ENCODE measurements at regions of chr7 and their contacts with region 1.

Region 1: DNA sequence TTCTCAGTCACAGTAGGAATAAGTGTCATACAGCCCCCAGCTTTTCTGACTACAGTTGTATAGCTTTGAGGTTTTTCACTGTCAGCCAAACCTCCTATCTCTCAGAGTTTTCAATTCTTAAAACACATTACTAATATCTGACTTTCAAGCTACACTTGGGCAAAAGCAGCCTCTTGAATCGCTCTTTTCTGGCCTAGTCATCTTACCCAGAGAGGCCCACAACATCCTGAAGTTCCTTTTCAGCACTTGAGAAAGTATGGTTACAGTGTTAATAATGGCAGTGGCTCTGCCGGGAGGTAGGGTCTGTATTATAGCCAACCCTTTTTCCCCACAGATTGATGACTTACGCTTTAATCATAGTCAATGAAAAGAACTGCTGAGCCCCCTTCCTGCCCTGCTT is 181.0 kb downstream of the LRRC4 start:
- DNase-seq: no peak
- H3K4me3 Mint-ChIP-seq: no peak overlapping the region
- H3K27ac Mint-ChIP-seq: peak overlapping the region; percentile 88
- H3K4me1 Mint-ChIP-seq: peaks cover 50% of the 10 kb centered on the region
- H3K27me3 Mint-ChIP-seq: peaks cover 2% of the 10 kb centered on the region

Region 2: DNA sequence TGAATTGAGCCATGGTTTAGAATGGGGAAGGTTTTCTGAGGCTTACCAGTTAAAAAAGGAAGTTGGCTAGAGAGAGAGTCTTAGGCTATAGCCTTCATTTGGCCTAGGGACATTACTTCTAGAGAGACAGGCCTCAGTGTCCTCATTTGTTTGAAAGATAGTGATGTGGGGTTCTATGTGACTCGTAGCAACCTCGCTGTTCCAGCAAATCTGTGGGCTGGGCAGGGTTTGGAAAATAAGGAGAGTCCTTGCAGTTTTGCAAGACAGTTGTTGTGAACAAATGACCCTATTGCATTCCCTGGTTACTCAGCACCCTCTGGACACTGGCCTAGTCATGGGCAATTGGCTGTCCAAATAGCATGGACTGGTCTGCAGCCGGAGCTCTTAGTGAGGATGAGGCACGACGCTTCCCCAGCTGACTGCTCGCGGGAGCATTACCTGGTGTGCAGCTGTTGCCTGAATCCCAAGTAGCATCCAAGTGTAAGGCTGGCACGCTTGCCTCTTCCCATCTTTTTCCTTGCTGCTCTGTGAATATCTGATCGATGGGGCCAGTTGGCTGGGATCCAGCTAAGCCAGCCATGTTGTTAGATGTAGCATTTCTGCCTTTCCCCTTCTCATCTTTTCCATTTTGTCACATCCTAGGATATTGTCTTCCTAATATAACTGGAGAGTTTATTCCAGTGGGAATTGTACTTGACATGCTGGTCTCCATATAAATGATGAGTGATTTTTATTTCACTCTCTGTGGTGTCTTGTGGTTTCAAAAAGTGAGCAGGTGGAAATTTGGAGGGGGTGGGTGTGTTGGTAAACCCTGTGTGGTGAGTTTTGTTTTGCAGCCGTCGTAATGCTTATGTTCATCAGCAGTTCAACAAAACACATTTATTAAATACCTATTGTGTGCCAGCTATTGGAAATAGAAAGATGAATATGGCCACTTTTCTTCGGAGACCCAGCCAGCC is 98.4 kb before region 1 on chr7:
- intact Hi-C with region 1: loop called (anchors 2 kb)
- DNase-seq: no peak
- H3K4me3 Mint-ChIP-seq: no peak overlapping the region
- H3K27ac Mint-ChIP-seq: peak overlapping the region; percentile 54
- H3K4me1 Mint-ChIP-seq: peaks cover 41% of the 10 kb centered on the region
- H3K27me3 Mint-ChIP-seq: no peaks in the 10 kb centered on the region

Region 3: GRCh38 chr7:127809261-127809702 is 40.9 kb before region 1 on chr7:
- intact Hi-C with region 1: no loop called
- DNase-seq: no peak
- H3K4me3 Mint-ChIP-seq: no peak overlapping the region
- H3K27ac Mint-ChIP-seq: no peak overlapping the region
- H3K4me1 Mint-ChIP-seq: peaks cover 56% of the 10 kb centered on the region
- H3K27me3 Mint-ChIP-seq: no peaks in the 10 kb centered on the region

Region 4: GRCh38 chr7:127819975-127820731 is 30.0 kb before region 1 on chr7:
- intact Hi-C with region 1: loop called (anchors 1 kb)
- DNase-seq: no peak
- H3K4me3 Mint-ChIP-seq: peak overlapping the region; percentile 3
- H3K27ac Mint-ChIP-seq: peak overlapping the region; percentile 37
- H3K4me1 Mint-ChIP-seq: peaks cover 46% of the 10 kb centered on the region
- H3K27me3 Mint-ChIP-seq: no peaks in the 10 kb centered on the region

Region 5: DNA sequence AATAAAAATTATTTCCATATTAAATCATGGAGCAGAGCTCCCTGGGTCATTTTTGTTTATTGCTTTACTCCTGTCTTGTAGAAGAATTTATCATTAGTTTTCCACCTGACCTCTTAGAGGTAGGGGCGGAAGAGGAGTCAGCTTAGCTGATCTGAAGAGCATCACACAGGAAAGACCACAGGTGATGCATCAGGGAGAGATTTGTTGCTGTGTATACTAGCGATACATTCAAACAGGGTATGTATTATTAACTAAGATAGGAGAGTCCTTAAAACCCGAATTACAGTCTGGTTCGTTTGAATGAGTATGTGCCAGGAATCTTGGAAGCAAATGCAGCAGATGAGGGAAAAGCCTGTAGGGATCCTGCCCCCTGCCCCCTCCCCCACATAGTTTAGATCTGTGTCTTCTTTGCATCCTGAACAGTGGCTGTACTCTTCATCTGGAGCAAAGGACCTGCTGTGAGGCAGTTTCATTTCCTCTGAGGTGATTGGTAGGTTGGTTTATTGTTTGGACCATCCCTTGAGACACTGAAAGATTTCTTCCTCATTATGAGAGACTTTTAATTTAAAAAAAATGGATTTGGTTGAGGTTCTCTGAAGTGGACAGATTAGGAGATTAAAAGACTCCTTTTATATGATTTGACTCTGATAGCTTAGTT is 21.2 kb before region 1 on chr7:
- intact Hi-C with region 1: loop called (anchors 2 kb)
- DNase-seq: no peak
- H3K4me3 Mint-ChIP-seq: no peak overlapping the region
- H3K27ac Mint-ChIP-seq: no peak overlapping the region
- H3K4me1 Mint-ChIP-seq: peaks cover 7% of the 10 kb centered on the region
- H3K27me3 Mint-ChIP-seq: no peaks in the 10 kb centered on the region

Region 6: DNA sequence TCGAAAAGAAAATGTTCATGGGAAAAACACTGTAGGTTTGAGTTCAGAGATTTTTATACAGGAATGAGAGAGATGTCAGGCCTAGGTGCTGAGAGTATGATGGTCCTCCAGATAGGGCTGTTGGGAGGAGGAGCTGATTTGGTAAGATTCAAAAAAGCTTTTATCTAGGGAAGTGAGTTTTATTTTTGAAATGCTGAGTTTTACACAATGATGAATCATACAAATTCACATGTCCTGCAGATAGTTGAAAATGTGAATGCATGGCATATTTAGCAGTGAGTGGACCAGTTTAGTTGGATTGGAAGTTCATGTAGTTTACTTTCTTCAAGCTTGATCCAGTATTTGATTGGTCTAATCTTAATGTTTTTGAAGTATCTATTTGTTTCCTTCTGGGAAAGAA is 26.2 kb after region 1 on chr7:
- intact Hi-C with region 1: loop called (anchors 1 kb)
- DNase-seq: no peak
- H3K4me3 Mint-ChIP-seq: no peak overlapping the region
- H3K27ac Mint-ChIP-seq: no peak overlapping the region
- H3K4me1 Mint-ChIP-seq: peaks cover 15% of the 10 kb centered on the region
- H3K27me3 Mint-ChIP-seq: no peaks in the 10 kb centered on the region

Region 7: DNA sequence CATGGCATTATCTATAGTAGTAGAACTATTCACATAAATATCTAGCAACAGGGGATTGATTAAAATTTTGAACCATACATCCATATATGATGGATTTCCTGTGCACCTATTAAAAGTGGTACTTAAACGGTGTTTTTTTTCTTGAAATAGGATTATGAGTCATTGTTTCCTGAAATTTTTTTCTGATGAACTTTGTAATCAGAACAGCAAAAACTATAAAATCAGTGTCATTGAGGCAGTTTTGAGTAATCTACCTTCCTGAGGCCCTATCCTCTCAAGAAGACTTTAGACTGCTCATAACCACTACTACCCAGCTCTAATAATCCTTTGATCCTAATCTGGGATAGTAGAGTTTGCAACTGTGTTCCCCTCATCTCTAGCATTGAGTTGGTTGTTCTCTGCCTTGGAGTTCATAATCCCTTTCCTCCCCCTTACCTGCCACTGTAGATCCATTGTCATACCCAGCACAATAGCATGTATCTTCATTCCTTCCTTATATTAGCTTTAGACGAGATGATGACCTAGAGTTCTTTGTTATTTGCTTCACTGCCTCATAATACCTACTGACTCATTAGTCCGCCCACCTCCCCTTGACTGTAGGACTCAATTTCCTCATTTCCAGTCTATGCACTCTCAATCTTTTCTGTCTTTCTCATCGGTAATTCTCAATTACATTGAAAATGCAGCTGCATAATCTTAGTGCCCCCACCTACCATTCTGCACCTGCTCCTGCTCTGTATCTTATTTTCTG is 47.7 kb after region 1 on chr7:
- intact Hi-C with region 1: loop called (anchors 1 kb)
- DNase-seq: no peak
- H3K4me3 Mint-ChIP-seq: no peak overlapping the region
- H3K27ac Mint-ChIP-seq: no peak overlapping the region
- H3K4me1 Mint-ChIP-seq: peaks cover 11% of the 10 kb centered on the region
- H3K27me3 Mint-ChIP-seq: no peaks in the 10 kb centered on the region

Region 8: DNA sequence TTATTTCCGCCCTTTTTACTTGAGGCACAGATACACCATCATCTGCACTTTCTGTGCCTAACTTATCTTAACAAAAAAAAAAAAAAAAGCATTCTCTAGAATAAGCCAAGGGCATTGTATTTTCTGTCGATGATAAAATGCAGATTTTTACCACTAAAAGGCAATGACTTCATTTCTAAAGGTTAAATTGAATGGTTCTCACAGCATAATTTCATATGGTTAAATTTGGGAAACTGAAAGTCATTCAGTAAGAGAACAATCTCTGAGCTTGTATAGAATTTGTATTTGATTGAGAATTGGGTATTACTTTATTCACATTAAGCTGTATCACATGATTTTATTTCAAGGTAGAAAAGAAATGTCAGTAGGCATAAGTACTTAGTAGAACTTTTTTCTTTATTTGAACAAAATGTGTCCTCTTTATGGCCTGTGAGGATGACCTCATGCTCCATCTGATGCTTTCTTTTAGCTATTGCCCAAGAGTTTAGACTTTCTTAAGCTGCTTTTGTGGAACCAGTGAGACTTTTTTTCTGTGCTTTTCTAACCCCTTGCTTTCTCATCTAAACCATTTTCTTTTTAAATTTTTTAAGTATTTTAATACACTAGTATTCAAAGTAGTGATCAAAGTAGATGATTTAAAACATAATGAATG is 70.7 kb after region 1 on chr7:
- intact Hi-C with region 1: no loop called
- DNase-seq: no peak
- H3K4me3 Mint-ChIP-seq: no peak overlapping the region
- H3K27ac Mint-ChIP-seq: no peak overlapping the region
- H3K4me1 Mint-ChIP-seq: peaks cover 15% of the 10 kb centered on the region
- H3K27me3 Mint-ChIP-seq: no peaks in the 10 kb centered on the region

Region 9: DNA sequence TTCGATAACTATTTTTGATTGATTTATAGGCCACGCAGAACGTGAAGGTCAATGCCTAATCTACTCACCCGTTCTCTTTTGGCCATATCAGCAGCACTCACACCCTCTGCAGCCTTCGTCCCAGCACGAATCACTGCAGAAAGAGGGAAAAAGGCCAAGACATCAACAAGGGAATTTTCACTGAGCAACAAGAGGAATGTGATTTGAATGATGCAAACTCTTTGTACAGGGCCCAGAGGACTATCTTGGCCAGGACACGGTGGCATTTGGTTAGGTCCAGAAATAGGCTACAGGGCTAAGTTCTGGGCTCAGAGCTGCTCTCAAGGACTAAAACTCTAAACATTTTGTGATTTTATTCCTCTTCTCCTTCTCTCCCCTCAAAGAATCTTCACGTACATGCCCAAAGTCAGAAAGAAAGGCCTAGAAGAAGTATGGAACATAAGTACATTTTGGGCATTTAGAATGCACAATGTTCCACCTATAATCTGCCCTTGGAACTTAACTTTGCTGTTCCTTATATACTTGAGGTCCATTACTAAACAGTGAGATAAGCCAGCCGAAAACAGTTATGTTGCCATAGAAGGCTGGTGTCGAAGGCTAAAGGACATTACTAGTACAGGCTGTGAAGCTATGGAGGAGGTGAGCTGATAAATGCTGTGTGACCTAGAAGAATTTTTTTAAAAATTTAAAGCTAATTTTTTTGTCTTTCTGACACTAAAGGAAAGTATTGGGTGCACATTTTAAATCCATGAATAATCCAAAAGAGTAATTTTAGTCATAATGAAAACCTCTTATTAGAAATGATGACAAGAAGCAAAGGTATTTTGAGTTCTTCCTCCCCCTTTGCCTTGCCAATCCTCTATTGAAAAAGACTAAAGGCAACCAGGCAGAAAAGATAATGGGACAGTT is 473.5 kb after region 1 on chr7:
- intact Hi-C with region 1: no loop called
- DNase-seq: no peak
- H3K4me3 Mint-ChIP-seq: no peak overlapping the region
- H3K27ac Mint-ChIP-seq: no peak overlapping the region
- H3K4me1 Mint-ChIP-seq: peaks cover 24% of the 10 kb centered on the region
- H3K27me3 Mint-ChIP-seq: no peaks in the 10 kb centered on the region